ENCODE measurements at regions of chr12 and their contacts with region 1.

Region 1: GRCh38 chr12:2057041-2057794 is 4.4 kb downstream of the CACNA1C start:
- DNase-seq: no peak
- H3K4me3 ChIP-seq: no peak overlapping the region
- H3K27ac ChIP-seq: no peak overlapping the region
- H3K4me1 ChIP-seq: peaks cover 14% of the 10 kb centered on the region
- H3K27me3 ChIP-seq: no peaks in the 10 kb centered on the region
- CTCF ChIP-seq: peak; percentile 24 to 51 (median 31)
- POLR2A ChIP-seq: no peak

Region 2: GRCh38 chr12:2163172-2163941 is 106.1 kb after region 1 on chr12:
- intact Hi-C with region 1: loop called (anchors 10 kb)
- DNase-seq: peak in 1 of 2 donors; percentile 93
- H3K4me3 ChIP-seq: no peak overlapping the region
- H3K27ac ChIP-seq: peak overlapping the region; percentile 60
- H3K4me1 ChIP-seq: peaks cover 29% of the 10 kb centered on the region
- H3K27me3 ChIP-seq: no peaks in the 10 kb centered on the region
- CTCF ChIP-seq: no peak
- POLR2A ChIP-seq: no peak

Region 3: GRCh38 chr12:2179953-2180736 is 122.9 kb after region 1 on chr12:
- intact Hi-C with region 1: no loop called
- DNase-seq: no peak
- H3K4me3 ChIP-seq: no peak overlapping the region
- H3K27ac ChIP-seq: peak overlapping the region; percentile 79
- H3K4me1 ChIP-seq: peaks cover 41% of the 10 kb centered on the region
- H3K27me3 ChIP-seq: no peaks in the 10 kb centered on the region
- CTCF ChIP-seq: no peak
- POLR2A ChIP-seq: no peak

Region 4: GRCh38 chr12:2284857-2285256 is 227.6 kb after region 1 on chr12:
- intact Hi-C with region 1: loop called (anchors 5 kb)
- DNase-seq: no peak
- H3K4me3 ChIP-seq: no peak overlapping the region
- H3K27ac ChIP-seq: peak overlapping the region; percentile 65
- H3K4me1 ChIP-seq: peaks cover 58% of the 10 kb centered on the region
- H3K27me3 ChIP-seq: no peaks in the 10 kb centered on the region
- CTCF ChIP-seq: peak in 2 of 3 experiments; percentile 28 to 30
- POLR2A ChIP-seq: no peak

Region 5: GRCh38 chr12:2341871-2342270 is 284.7 kb after region 1 on chr12:
- intact Hi-C with region 1: loop called (anchors 5 kb)
- DNase-seq: no peak
- H3K4me3 ChIP-seq: no peak overlapping the region
- H3K27ac ChIP-seq: peak overlapping the region; percentile 52
- H3K4me1 ChIP-seq: peaks cover 38% of the 10 kb centered on the region
- H3K27me3 ChIP-seq: no peaks in the 10 kb centered on the region
- CTCF ChIP-seq: no peak
- POLR2A ChIP-seq: no peak

Region 6: GRCh38 chr12:2583091-2583497 is 525.9 kb after region 1 on chr12:
- intact Hi-C with region 1: loop called (anchors 5 kb)
- DNase-seq: no peak
- H3K4me3 ChIP-seq: peak overlapping the region; percentile 6 to 29
- H3K27ac ChIP-seq: no peak overlapping the region
- H3K4me1 ChIP-seq: peaks cover 13% of the 10 kb centered on the region
- H3K27me3 ChIP-seq: no peaks in the 10 kb centered on the region
- CTCF ChIP-seq: peak; percentile 64 to 92 (median 89)
- POLR2A ChIP-seq: no peak